ENCODE measurements at regions of chr5 and their contacts with region 1.

Region 1: GRCh38 chr5:55146543-55147151 is 13.3 kb upstream of the GPX8 start:
- DNase-seq: peak; percentile 39 to 75 (median 63)
- H3K4me3 ChIP-seq: peak overlapping the region in 1 of 59 donors; percentile 15
- H3K27ac ChIP-seq: no peak overlapping the region
- H3K27me3 ChIP-seq: peaks cover 0 to 23% (median 0%) of the 10 kb centered on the region in 45 donors
- CTCF ChIP-seq: peak; percentile 59 to 97 (median 90)

Region 2: GRCh38 chr5:54905943-54906537 is 240.6 kb before region 1 on chr5:
- intact Hi-C with region 1: loop called (anchors 2 to 5 kb)
- DNase-seq: peak in 7 of 10 donors; percentile 44 to 82 (median 66)
- H3K4me3 ChIP-seq: no peak overlapping the region
- H3K27ac ChIP-seq: no peak overlapping the region
- H3K27me3 ChIP-seq: peaks cover 0 to 15% (median 0%) of the 10 kb centered on the region in 45 donors
- CTCF ChIP-seq: peak; percentile 48 to 86 (median 68)

Region 3: GRCh38 chr5:54946306-54946819 is 200.3 kb before region 1 on chr5:
- intact Hi-C with region 1: loop called in 1 of 2 experiments (anchors 5 kb)
- DNase-seq: no peak
- H3K4me3 ChIP-seq: no peak overlapping the region
- H3K27ac ChIP-seq: no peak overlapping the region
- H3K27me3 ChIP-seq: peaks cover 0 to 8% (median 0%) of the 10 kb centered on the region in 45 donors
- CTCF ChIP-seq: no peak